Kidney (tissue), 22 donors: ENCODE measurements at regions of chr3 and their contacts with region 1.

Region 1: DNA sequence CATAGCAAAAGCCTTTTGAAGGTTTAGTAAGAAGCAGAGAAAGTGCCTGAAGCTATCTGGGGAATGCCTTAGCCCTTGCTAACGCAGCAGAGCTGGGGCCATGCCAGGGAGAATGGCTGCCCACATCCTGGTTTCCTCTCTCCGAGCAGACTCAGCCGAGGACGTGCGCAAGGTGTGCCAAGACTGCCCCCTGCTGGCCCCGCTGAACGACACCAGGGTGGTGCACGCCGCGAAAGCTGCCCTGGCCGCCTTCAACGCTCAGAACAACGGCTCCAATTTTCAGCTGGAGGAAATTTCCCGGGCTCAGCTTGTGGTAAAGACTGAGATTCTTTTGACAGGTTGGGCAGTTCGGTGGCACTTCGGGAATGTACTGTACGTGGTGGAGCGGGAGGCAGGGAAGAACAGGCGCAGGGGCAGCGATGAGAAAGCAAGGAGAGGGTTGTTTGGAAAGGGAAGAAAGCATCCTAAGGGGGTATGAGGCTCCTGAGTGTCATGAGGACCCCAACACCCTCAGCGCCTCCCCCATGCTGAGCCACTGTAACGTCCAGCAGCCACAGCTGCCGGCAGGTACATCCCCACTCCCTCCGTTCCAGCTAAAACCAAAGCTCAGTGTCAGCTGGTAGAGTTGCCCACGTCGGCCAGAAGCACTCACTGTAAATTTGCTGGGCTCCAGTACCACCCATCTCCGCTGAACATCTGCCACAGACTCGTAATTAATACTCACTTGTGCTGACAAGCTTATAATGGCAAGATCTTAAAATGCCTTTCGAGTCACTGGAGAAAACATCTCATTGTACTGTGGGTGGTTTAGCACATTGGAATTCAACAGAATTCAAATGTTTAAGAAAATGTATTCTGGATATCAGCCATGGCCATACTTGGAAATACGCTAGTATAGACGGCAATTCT is 4.4 kb downstream of the AHSG start:
- DNase-seq: peak; percentile 82 to 97 (median 87)
- H3K4me3 ChIP-seq: peak overlapping the region in 2 of 3 donors; percentile 36 to 37
- H3K27ac ChIP-seq: no peak overlapping the region
- H3K4me1 ChIP-seq: peaks cover 0 to 5% (median 0%) of the 10 kb centered on the region in 3 donors
- H3K27me3 ChIP-seq: no peaks in the 10 kb centered on the region
- CTCF ChIP-seq: peak; percentile 94

Region 2: DNA sequence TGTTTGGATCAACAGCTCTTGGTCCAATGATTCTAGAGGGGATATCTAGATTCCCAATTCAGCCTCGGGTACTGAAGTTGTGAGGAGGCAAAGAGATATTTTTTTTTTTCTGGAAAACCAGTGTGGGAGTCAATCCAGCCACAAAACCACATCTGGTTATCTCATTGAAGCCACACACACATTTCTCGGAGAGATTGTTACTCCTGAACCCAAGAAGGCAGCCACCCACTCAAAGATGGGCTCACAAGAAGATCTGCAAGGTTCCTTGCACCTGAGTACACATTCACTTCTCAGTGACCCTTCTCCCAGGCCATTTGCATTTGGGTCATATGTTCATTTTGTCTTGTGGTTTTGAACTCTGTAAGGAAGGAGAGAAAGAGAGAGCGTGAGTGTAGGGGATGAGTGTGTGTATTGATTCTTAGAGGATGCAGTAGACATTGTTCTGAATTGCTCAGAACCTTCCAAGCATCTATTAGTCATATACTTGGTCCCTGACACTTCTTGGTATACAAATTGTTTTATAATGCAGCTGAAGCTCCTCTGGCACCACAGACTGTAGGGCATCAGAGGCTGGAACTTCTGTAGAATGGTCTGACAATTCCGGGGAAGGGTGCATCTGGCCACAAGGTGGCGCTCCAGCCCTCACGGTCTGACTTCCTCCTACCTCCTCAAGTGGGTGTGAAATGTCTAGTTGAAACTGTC is 640.2 kb before region 1 on chr3:
- intact Hi-C with region 1: loop called (anchors 10 kb)
- DNase-seq: peak; percentile 64 to 88 (median 69)
- H3K4me3 ChIP-seq: no peak overlapping the region
- H3K27ac ChIP-seq: no peak overlapping the region
- H3K4me1 ChIP-seq: no peaks in the 10 kb centered on the region
- H3K27me3 ChIP-seq: no peaks in the 10 kb centered on the region
- CTCF ChIP-seq: peak; percentile 74

Region 3: GRCh38 chr3:186909078-186909853 is 292.0 kb after region 1 on chr3:
- intact Hi-C with region 1: no loop called
- DNase-seq: peak in 1 of 5 donors; percentile 32
- H3K4me3 ChIP-seq: no peak overlapping the region
- H3K27ac ChIP-seq: no peak overlapping the region
- H3K4me1 ChIP-seq: no peaks in the 10 kb centered on the region
- H3K27me3 ChIP-seq: no peaks in the 10 kb centered on the region
- CTCF ChIP-seq: no peak